ENCODE measurements at regions of chr7 and their contacts with region 1.

Region 1: DNA sequence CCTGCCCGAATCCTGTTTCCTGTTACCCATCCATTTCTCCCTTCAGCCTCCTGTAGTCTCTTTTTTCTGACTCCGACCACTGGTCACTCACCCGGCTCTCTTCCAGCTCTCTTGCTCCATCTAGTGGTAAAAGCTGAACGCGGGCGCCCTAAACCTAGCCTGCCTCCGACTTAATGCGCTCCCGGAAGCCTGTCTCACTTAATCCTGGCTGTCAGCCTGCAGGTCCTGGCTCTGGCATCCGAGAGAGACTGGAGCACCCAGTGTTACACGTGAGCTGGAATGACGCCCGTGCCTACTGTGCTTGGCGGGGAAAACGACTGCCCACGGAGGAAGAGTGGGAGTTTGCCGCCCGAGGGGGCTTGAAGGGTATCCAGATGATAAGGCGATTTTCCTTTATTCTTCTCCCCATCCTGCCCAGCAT is 10.3 kb downstream of the SUMF2 start:
- DNase-seq: peak; percentile 71
- H3K4me3 Mint-ChIP-seq: no peak overlapping the region
- H3K27ac Mint-ChIP-seq: no peak overlapping the region
- H3K4me1 Mint-ChIP-seq: peaks cover 2% of the 10 kb centered on the region
- H3K27me3 Mint-ChIP-seq: no peaks in the 10 kb centered on the region

Region 2: DNA sequence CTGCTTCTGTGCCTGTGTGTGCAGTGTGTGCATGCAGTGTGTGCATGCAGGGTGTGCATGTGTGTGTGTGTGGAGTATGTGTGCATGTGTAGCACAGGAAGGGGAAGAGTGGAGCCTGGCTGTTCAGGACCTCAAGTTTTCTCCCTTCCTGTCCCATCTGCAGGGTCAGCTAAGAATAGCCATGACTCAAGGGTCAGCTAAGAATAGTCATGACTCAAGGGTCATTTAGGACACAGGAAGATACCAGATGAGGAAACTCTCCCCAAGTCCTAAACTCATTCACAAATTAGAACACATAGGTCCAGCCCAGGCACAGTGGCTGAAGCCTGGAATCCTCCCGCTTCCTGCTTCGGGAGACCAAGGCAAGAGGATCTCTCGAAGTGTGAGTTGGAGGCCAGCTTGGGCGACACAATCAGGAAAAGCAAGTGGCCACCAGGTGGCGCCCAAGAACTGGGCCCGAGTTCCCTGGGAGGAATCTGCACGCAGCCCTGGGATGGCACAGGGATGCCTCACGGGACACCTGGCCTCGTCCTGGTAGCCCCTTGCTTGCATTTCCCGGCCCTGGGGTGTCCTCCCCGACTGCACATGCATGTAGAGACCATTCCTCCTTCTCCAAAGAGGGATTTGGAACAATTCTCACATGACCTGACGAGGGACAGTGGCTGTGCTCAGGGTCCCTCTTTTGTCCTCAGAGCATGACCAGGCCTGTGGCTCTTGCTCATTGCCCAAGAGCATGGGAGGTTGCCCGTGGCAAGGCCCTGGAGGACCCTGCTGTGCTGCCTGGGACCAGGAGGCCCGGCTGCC is 480.7 kb before region 1 on chr7:
- CTCF ChIA-PET with region 1: interaction called, 11 read pairs
- POLR2A ChIA-PET with region 1: no interaction called
- DNase-seq: peak; percentile 72
- H3K4me3 Mint-ChIP-seq: no peak overlapping the region
- H3K27ac Mint-ChIP-seq: no peak overlapping the region
- H3K4me1 Mint-ChIP-seq: no peaks in the 10 kb centered on the region
- H3K27me3 Mint-ChIP-seq: peaks cover 4% of the 10 kb centered on the region

Region 3: GRCh38 chr7:55641273-55641691 is 433.1 kb before region 1 on chr7:
- CTCF ChIA-PET with region 1: interaction called, 18 read pairs
- POLR2A ChIA-PET with region 1: interaction called, 5 read pairs
- DNase-seq: peak; percentile 35
- H3K4me3 Mint-ChIP-seq: no peak overlapping the region
- H3K27ac Mint-ChIP-seq: no peak overlapping the region
- H3K4me1 Mint-ChIP-seq: peaks cover 12% of the 10 kb centered on the region
- H3K27me3 Mint-ChIP-seq: peaks cover 6% of the 10 kb centered on the region

Region 4: DNA sequence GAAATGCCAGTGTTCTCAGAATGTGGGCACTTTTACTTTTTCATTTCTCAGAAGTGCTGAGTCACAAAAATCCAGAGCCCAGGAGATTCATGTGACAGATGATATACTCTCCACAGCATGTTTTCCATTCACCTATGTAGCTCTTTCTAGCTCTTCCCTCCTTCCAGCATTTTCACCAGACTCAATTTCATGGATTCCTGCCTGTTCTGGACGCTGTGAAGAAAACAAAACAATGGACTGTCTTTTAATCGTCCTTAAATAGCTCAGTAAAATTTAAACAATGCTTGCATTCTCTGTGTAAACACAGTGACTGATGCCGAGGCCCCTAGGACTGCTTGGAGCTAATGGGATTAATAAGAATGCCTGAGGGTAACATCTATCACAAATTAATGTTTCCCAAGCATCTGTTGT is 161.6 kb before region 1 on chr7:
- CTCF ChIA-PET with region 1: no interaction called
- POLR2A ChIA-PET with region 1: no interaction called
- DNase-seq: no peak
- H3K4me3 Mint-ChIP-seq: no peak overlapping the region
- H3K27ac Mint-ChIP-seq: no peak overlapping the region
- H3K4me1 Mint-ChIP-seq: peaks cover 8% of the 10 kb centered on the region
- H3K27me3 Mint-ChIP-seq: no peaks in the 10 kb centered on the region

Region 5: DNA sequence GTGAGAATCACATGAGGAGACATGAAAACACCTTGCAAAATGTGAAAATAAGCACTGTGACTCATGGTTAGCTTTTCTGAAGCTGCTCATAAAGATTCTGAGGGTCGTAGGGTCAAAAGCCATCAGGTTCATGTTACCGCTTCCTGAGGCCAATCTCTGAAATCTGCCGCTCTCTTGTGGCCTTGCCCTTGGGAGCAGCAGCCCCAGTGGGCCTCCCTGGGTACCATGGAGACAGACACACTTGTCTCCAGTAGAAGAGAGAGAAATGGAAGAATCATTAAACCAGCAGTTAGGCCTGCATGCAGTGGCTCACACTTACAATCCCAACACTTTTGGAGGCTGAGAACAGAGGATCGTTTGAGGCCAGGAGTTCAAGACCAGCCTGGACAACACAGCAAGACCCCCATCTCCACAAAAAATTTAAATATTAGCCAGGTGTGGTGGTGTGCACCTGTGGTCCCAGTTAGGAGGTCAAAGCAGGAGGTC is 67.2 kb before region 1 on chr7:
- CTCF ChIA-PET with region 1: interaction called, 40 read pairs
- POLR2A ChIA-PET with region 1: interaction called, 6 read pairs
- DNase-seq: no peak
- H3K4me3 Mint-ChIP-seq: no peak overlapping the region
- H3K27ac Mint-ChIP-seq: no peak overlapping the region
- H3K4me1 Mint-ChIP-seq: peaks cover 3% of the 10 kb centered on the region
- H3K27me3 Mint-ChIP-seq: no peaks in the 10 kb centered on the region

Region 6: DNA sequence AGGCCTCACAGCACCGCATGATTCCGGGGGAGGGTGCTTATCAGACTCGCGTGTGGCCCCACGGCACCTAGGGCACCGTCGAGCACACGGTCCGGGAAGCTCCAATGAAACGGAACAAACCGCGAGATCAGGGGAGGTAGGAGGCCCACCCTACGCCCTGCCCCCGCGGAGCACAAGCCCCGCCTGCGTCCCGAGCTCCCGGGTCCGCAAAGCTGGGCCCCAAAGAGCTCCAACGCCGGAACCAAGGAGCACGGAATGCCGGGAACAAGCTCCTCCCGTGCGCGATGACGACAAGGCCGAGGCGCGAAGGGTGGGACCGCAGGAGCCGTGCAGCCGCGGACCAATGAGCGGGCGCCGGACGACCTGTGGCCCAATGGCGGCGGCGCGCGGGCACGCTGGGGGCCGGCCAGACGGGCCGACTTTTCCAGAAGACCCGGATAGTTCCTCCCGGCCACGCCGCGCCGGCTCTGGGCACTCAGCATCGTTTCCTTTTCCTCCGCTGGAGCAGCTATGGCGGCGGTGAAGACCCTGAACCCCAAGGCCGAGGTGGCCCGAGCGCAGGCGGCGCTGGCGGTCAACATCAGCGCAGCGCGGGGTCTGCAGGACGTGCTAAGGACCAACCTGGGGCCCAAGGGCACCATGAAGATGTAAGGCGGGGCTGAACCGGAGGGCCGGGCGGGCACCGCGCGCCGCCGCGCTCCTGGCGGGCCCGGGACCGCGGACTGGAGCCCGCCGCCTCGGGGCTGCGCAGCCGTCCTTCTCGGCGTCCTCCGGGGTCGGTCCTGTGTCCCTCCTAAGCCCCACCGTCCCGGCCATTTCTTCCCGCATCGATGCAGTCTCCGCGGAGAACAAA is 22.8 kb before region 1 on chr7 and contains the starts of genes CCT6A and PSPH:
- CTCF ChIA-PET with region 1: interaction called, 12 read pairs
- POLR2A ChIA-PET with region 1: interaction called, 6 read pairs
- DNase-seq: peak; percentile 91
- H3K4me3 Mint-ChIP-seq: peak within 1 kb of the TSS; percentile 96
- H3K27ac Mint-ChIP-seq: peak within 1 kb of the TSS; percentile 89
- H3K4me1 Mint-ChIP-seq: peaks cover 50% of the 10 kb centered on the region
- H3K27me3 Mint-ChIP-seq: no peaks in the 10 kb centered on the region
- total RNA-seq, gene CCT6A: 105 TPM
- total RNA-seq, gene PSPH: 12.0 to 13.7 TPM

Region 7: GRCh38 chr7:56063882-56064625 is 10.3 kb before region 1 on chr7 and contains the start of gene SUMF2:
- CTCF ChIA-PET with region 1: interaction called, 33 read pairs
- POLR2A ChIA-PET with region 1: interaction called, 4 read pairs
- DNase-seq: peak; percentile 89
- H3K4me3 Mint-ChIP-seq: peak within 1 kb of the TSS; percentile 87
- H3K27ac Mint-ChIP-seq: peak within 1 kb of the TSS; percentile 82
- H3K4me1 Mint-ChIP-seq: peaks cover 43% of the 10 kb centered on the region
- H3K27me3 Mint-ChIP-seq: no peaks in the 10 kb centered on the region
- total RNA-seq, gene SUMF2: 118 to 119 TPM

Region 8: DNA sequence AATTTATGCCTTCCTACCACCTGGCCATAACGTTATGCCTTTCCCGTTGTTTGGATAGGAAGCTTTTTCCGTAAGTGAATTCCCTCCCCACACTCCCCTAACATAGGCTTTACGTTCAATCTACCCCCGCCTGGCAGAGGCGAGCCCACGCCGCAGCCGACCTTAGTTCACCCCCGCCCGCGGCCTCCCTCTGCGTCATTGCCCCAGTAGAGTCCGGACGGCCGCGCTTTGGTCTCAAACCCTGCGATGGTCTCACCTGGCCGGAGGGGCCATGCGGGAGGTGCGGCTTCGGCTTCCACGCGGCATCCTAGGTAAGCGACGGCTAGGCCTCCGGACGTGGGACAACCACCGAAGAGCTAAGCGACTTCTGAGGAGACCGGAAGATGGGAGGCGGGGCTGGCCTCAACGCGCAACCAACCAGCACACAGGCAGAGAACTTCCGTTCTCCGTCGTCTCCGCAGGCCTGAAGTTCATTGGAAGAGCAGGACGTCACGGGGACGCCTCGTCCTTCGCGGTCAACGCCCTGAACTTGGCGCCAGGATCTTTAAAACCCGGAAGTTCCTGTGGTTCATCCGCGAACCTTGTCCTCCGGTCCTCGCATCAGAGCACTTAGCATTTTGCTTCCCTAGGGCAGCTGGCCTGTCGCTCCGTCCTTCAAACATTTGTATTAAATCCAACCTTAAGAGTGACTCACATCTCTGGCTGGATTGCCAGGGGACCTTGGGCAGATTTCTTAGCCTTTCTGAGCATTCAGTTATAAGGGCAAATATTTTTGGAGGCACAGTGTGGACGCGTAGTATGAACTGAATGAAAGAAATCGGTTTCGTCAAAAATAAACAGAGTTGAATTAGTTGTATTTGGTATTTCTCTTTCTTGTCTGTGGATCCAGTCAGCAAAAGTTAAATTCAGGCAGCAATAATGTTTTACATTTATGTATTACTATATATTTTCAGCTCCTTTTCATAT is 32.0 kb after region 1 on chr7 and contains the start of gene CHCHD2:
- CTCF ChIA-PET with region 1: interaction called, 4 read pairs
- POLR2A ChIA-PET with region 1: interaction called, 16 read pairs
- DNase-seq: peak; percentile 96
- H3K4me3 Mint-ChIP-seq: peak within 1 kb of the TSS; percentile 99
- H3K27ac Mint-ChIP-seq: peak within 1 kb of the TSS; percentile 94
- H3K4me1 Mint-ChIP-seq: peaks cover 44% of the 10 kb centered on the region
- H3K27me3 Mint-ChIP-seq: no peaks in the 10 kb centered on the region
- total RNA-seq, gene CHCHD2: 482 to 505 TPM

Region 9: GRCh38 chr7:56125831-56126230 is 51.5 kb after region 1 on chr7:
- CTCF ChIA-PET with region 1: no interaction called
- POLR2A ChIA-PET with region 1: no interaction called
- DNase-seq: no peak
- H3K4me3 Mint-ChIP-seq: no peak overlapping the region
- H3K27ac Mint-ChIP-seq: no peak overlapping the region
- H3K4me1 Mint-ChIP-seq: no peaks in the 10 kb centered on the region
- H3K27me3 Mint-ChIP-seq: no peaks in the 10 kb centered on the region

Measured in activated CD4-positive, alpha-beta memory T cell treated with anti-CD3 and anti-CD28 coated beads, Interleukin-2, amount 10 ng/mL, durations not matched to agents 7 days and 5 days (primary cell).